BJ (cell line): ENCODE measurements at regions of chr14 and their contacts with region 1.

Region 1: GRCh38 chr14:102774391-102775153 is 2.7 kb upstream of the TRAF3 start:
- DNase-seq: no peak
- H3K4me3 ChIP-seq: no peak overlapping the region
- H3K27me3 ChIP-seq: peaks cover 5% of the 10 kb centered on the region
- CTCF ChIP-seq: peak; percentile 89

Region 2: GRCh38 chr14:102645746-102646440 is 128.7 kb before region 1 on chr14:
- CTCF ChIA-PET with region 1: no interaction called
- POLR2A ChIA-PET with region 1: no interaction called
- DNase-seq: no peak
- H3K4me3 ChIP-seq: no peak overlapping the region
- H3K27me3 ChIP-seq: no peaks in the 10 kb centered on the region
- CTCF ChIP-seq: no peak

Region 3: GRCh38 chr14:102917469-102918211 is 143.1 kb after region 1 on chr14:
- CTCF ChIA-PET with region 1: interaction called, 33 read pairs
- POLR2A ChIA-PET with region 1: no interaction called
- DNase-seq: no peak
- H3K4me3 ChIP-seq: no peak overlapping the region
- H3K27me3 ChIP-seq: no peaks in the 10 kb centered on the region
- CTCF ChIP-seq: peak; percentile 76